CD4-positive, alpha-beta T cell (primary cell): ENCODE measurements at regions of chr2 and their contacts with region 1.

Region 1: DNA sequence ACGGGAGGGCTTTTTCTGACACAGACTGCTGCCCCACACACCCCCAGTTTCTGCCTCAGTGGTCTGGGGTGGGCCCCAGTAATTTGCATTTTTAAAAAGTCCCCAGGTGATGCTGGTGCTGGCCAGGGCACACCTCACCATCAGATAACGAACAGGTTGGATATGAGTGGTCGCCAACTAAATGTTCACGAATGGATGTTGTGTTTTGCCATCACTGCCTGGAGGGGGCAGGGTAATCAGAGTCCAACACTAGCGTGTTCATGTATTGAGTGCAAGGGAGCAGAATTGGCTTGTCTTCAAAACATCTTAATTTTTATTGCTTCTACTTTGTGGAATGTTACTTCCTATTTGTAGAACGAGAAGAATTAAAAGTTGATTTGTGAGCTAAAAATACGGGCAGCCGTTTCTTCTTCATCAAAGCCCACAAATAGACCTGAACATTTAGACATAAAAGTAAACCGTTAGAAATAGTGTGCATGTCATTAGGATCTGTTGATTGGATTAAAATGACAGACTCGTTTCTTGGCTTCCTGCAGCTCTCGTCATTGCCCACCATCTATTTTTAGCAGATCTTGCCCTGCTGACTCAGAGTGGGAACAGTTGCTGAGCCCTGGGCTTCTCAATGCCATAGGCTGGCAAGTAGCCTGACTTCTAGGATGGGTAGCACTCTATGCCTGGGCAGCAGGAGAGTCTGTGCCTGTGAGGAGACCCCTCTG is 45.2 kb downstream of the NCK2 start:
- DNase-seq: peak in 9 of 14 experiments; percentile 37 to 85 (median 67)
- ATAC-seq: peak; percentile 85
- H3K4me3 ChIP-seq: peak overlapping the region; percentile 24
- H3K4me3 Mint-ChIP-seq: peak overlapping the region; percentile 79
- H3K27ac ChIP-seq: peak overlapping the region; percentile 76 to 83
- H3K27ac Mint-ChIP-seq: peak overlapping the region; percentile 98
- H3K4me1 ChIP-seq: peaks cover 89% of the 10 kb centered on the region
- H3K4me1 Mint-ChIP-seq: peaks cover 92% of the 10 kb centered on the region
- H3K27me3 ChIP-seq: no peaks in the 10 kb centered on the region
- H3K27me3 Mint-ChIP-seq: no peaks in the 10 kb centered on the region
- CTCF ChIP-seq: no peak

Region 2: GRCh38 chr2:105775809-105776559 is 13.9 kb before region 1 on chr2:
- CTCF ChIA-PET with region 1: interaction called, 3 read pairs
- POLR2A ChIA-PET with region 1: interaction called, 19 read pairs
- intact Hi-C with region 1: no loop called
- DNase-seq: peak in 5 of 14 experiments; percentile 28 to 86 (median 68)
- ATAC-seq: peak; percentile 62
- H3K4me3 ChIP-seq: peak overlapping the region; percentile 41
- H3K4me3 Mint-ChIP-seq: peak overlapping the region; percentile 79
- H3K27ac ChIP-seq: peak overlapping the region; percentile 69 to 92
- H3K27ac Mint-ChIP-seq: peak overlapping the region; percentile 98
- H3K4me1 ChIP-seq: peaks cover 92% of the 10 kb centered on the region
- H3K4me1 Mint-ChIP-seq: peaks cover 94% of the 10 kb centered on the region
- H3K27me3 ChIP-seq: no peaks in the 10 kb centered on the region
- H3K27me3 Mint-ChIP-seq: no peaks in the 10 kb centered on the region
- CTCF ChIP-seq: no peak

Region 3: GRCh38 chr2:105815401-105815800 is 25.5 kb after region 1 on chr2:
- CTCF ChIA-PET with region 1: no interaction called
- POLR2A ChIA-PET with region 1: no interaction called
- intact Hi-C with region 1: no loop called
- DNase-seq: no peak
- ATAC-seq: no peak
- H3K4me3 ChIP-seq: no peak overlapping the region
- H3K4me3 Mint-ChIP-seq: no peak overlapping the region
- H3K27ac ChIP-seq: no peak overlapping the region
- H3K27ac Mint-ChIP-seq: peak overlapping the region; percentile 98
- H3K4me1 ChIP-seq: peaks cover 66% of the 10 kb centered on the region
- H3K4me1 Mint-ChIP-seq: peaks cover 90% of the 10 kb centered on the region
- H3K27me3 ChIP-seq: no peaks in the 10 kb centered on the region
- H3K27me3 Mint-ChIP-seq: no peaks in the 10 kb centered on the region
- CTCF ChIP-seq: no peak